Activated CD8-positive, alpha-beta T cell treated with anti-CD3 and anti-CD28 coated beads, Interleukin-2, amount 10 ng/mL, durations not matched to agents 7 days and 5 days (primary cell): ENCODE measurements at regions of chr9 and their contacts with region 1.

Region 1: DNA sequence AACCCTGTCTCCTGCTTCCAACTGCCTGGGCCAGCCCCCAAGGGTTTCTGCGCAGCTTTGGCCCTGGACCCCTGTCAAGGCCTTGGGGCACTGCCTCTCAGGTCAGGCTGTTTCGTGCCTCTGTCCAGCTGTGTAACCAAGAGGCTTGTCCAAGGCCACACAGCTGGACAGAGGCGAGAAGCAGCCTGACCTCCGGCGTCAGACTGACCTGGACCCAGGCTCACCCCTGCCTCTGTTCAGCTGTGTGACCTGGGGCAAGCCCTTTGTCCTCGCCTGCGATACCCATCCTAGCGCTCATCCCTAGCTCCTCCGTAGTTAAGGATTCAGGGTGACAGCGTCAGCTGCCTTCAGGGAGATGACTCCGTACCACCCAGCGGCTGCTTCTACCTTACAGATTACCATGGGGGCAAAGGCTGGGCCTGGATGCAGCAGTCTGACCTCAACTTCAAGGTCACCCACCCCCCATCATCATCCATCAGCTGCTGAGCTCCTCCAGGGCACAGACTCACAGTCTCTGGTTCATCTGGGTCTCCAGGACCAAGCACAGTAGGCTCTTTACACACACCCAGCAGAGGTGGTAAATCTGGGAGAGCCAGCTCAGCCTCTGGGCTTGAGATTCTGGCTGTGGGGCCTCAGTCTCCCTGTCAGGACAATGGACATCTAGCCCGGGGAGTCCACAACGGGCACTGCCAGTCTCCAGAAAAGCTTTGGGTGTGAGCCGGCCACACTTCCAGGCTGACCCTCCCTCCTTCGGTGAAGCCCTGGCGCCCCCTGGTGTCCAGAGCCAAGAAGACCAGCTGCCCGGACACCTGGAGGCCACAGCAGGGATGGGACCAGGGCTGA is 7.9 kb downstream of the AK1 start:
- DNase-seq: peak; percentile 87
- ATAC-seq: peak; percentile 89
- H3K4me3 Mint-ChIP-seq: no peak overlapping the region
- H3K27ac Mint-ChIP-seq: no peak overlapping the region
- H3K4me1 Mint-ChIP-seq: peaks cover 23% of the 10 kb centered on the region
- H3K27me3 Mint-ChIP-seq: no peaks in the 10 kb centered on the region

Region 2: GRCh38 chr9:127763918-127764384 is 105.6 kb before region 1 on chr9:
- CTCF ChIA-PET with region 1: interaction called, 47 read pairs
- POLR2A ChIA-PET with region 1: interaction called, 3 read pairs
- DNase-seq: peak; percentile 42
- ATAC-seq: peak; percentile 45
- H3K4me3 Mint-ChIP-seq: no peak overlapping the region
- H3K27ac Mint-ChIP-seq: peak overlapping the region; percentile 57
- H3K4me1 Mint-ChIP-seq: peaks cover 58% of the 10 kb centered on the region
- H3K27me3 Mint-ChIP-seq: no peaks in the 10 kb centered on the region

Region 3: GRCh38 chr9:127779136-127779981 is 90.2 kb before region 1 on chr9:
- CTCF ChIA-PET with region 1: interaction called, 55 read pairs
- POLR2A ChIA-PET with region 1: no interaction called
- DNase-seq: peak; percentile 66
- ATAC-seq: peak; percentile 41
- H3K4me3 Mint-ChIP-seq: peak overlapping the region; percentile 98
- H3K27ac Mint-ChIP-seq: peak overlapping the region; percentile 98
- H3K4me1 Mint-ChIP-seq: peaks cover 69% of the 10 kb centered on the region
- H3K27me3 Mint-ChIP-seq: no peaks in the 10 kb centered on the region

Region 4: GRCh38 chr9:127793093-127793708 is 76.3 kb before region 1 on chr9:
- CTCF ChIA-PET with region 1: interaction called, 20 read pairs
- POLR2A ChIA-PET with region 1: interaction called, 3 read pairs
- DNase-seq: no peak
- ATAC-seq: no peak
- H3K4me3 Mint-ChIP-seq: no peak overlapping the region
- H3K27ac Mint-ChIP-seq: peak overlapping the region; percentile 16
- H3K4me1 Mint-ChIP-seq: peaks cover 57% of the 10 kb centered on the region
- H3K27me3 Mint-ChIP-seq: no peaks in the 10 kb centered on the region

Region 5: DNA sequence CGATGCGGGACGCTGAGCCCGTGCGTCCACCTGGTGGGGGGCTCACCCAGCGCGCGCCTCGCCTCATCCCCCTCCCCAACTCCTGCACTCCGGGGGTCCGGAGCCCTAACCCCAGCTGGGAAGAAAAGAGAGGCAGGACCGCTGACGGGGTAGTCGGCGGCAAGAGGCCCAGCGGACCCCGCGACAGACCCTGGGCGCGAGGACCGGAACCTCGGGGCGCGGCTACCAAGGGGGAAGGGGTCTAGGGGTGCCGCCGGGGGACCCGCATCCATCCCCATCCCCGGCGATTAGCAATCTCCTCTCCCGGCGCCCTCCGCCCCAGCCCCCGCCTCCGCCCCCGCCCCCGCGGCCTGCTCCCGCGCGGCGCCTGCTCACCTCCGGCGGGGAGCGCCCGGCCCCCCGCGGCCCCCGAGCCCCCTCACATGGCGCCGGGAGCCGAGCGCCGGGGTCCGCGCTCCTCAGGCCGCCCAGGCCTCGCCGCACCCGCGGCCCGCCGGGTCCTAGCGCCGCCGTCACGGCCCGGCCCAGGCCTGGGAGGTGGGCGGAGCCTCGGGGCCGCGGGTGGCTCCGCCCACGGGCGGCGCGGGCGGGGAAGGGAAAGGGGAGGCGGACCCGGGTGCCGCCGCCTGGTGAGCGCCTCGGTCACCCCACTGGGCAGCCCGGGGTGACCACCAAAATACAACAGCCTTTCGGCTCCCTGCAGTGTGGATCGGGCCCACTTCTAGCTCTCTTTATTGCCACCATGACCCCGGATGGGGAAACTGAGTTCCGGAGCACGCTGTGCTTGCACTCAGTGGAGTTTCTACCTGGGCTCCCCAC is 29.8 kb after region 1 on chr9 and contains the start of gene ST6GALNAC6:
- CTCF ChIA-PET with region 1: interaction called, 13 read pairs
- POLR2A ChIA-PET with region 1: interaction called, 5 read pairs
- DNase-seq: peak; percentile 73
- ATAC-seq: peak; percentile 77
- H3K4me3 Mint-ChIP-seq: peak within 1 kb of the TSS; percentile 83
- H3K27ac Mint-ChIP-seq: peak within 1 kb of the TSS; percentile 86
- H3K4me1 Mint-ChIP-seq: peaks cover 39% of the 10 kb centered on the region
- H3K27me3 Mint-ChIP-seq: no peaks in the 10 kb centered on the region
- total RNA-seq, gene ST6GALNAC6: 68.6 to 77.6 TPM

Region 6: GRCh38 chr9:127916665-127917613 is 47.4 kb after region 1 on chr9 and contains the start of gene ST6GALNAC4:
- CTCF ChIA-PET with region 1: interaction called, 38 read pairs
- POLR2A ChIA-PET with region 1: no interaction called
- DNase-seq: peak; percentile 96
- ATAC-seq: peak; percentile 93
- H3K4me3 Mint-ChIP-seq: peak within 1 kb of the TSS; percentile 89
- H3K27ac Mint-ChIP-seq: peak within 1 kb of the TSS; percentile 95
- H3K4me1 Mint-ChIP-seq: peaks cover 75% of the 10 kb centered on the region
- H3K27me3 Mint-ChIP-seq: no peaks in the 10 kb centered on the region
- total RNA-seq, gene ST6GALNAC4: 37.0 to 39.7 TPM

Region 7: GRCh38 chr9:127937388-127938280 is 68.1 kb after region 1 on chr9 and contains the start of gene DPM2:
- CTCF ChIA-PET with region 1: no interaction called
- POLR2A ChIA-PET with region 1: no interaction called
- DNase-seq: peak; percentile 93
- ATAC-seq: peak; percentile 94
- H3K4me3 Mint-ChIP-seq: peak within 1 kb of the TSS; percentile 90
- H3K27ac Mint-ChIP-seq: peak within 1 kb of the TSS; percentile 95
- H3K4me1 Mint-ChIP-seq: peaks cover 53% of the 10 kb centered on the region
- H3K27me3 Mint-ChIP-seq: no peaks in the 10 kb centered on the region
- total RNA-seq, gene DPM2: 47.9 to 53.8 TPM